CD4-positive, alpha-beta T cell (primary cell): ENCODE measurements at regions of chrX and their contacts with region 1.

Region 1: DNA sequence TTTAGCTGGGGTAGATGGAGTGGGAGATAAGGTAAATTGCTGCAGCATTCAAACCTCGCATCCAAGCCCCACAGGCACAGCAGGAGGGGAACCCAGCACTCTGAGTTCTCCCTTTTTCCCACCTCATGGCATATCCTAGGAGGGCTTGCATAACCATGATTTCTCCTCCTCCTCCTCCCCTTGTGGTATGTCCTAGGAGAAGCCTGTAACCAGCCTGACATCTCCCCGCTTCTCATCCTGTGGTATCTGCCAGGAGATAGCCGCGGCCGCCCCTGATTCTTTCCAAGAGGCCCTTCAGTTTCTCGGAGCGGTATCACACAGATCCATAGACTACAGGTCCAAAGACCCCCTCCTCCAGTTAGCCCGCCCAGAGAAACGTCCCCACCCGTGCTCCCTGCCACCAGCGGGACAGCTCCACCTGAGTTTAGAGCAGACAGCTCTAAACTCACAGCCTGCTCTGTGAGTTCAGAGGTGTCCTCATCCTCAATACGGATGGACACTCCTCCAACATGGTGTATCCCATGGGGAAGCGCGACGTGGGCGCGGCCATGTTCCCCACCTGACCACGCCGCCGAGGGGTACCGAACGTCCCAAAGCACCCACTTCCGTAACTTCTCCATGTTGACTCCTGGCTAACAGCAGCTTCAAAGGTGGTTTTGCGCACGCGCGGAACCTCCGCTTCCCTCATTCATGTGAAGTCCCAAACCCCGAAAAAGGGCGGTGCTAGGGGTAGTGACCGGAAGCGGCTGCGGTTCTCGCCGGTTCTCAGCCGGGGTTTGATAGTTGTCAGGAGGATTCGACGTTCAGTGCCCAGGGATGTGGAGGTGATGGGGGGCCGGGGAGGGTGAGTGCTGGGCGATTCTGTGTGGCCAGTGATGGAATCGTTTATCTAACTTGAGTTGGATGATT is at the start of gene ZNF81:
- DNase-seq: peak; percentile 80 to 95 (median 88)
- ATAC-seq: peak; percentile 96
- H3K4me3 ChIP-seq: peak within 1 kb of the TSS; percentile 77
- H3K4me3 Mint-ChIP-seq: peak within 1 kb of the TSS; percentile 99
- H3K27ac ChIP-seq: peak within 1 kb of the TSS; percentile 22 to 52
- H3K27ac Mint-ChIP-seq: peak within 1 kb of the TSS; percentile 97
- H3K4me1 ChIP-seq: peaks cover 10% of the 10 kb centered on the region
- H3K4me1 Mint-ChIP-seq: peaks cover 37% of the 10 kb centered on the region
- H3K27me3 ChIP-seq: no peaks in the 10 kb centered on the region
- H3K27me3 Mint-ChIP-seq: no peaks in the 10 kb centered on the region
- CTCF ChIP-seq: no peak
- total RNA-seq, gene ZNF81: 5.1 to 5.7 TPM

Region 2: DNA sequence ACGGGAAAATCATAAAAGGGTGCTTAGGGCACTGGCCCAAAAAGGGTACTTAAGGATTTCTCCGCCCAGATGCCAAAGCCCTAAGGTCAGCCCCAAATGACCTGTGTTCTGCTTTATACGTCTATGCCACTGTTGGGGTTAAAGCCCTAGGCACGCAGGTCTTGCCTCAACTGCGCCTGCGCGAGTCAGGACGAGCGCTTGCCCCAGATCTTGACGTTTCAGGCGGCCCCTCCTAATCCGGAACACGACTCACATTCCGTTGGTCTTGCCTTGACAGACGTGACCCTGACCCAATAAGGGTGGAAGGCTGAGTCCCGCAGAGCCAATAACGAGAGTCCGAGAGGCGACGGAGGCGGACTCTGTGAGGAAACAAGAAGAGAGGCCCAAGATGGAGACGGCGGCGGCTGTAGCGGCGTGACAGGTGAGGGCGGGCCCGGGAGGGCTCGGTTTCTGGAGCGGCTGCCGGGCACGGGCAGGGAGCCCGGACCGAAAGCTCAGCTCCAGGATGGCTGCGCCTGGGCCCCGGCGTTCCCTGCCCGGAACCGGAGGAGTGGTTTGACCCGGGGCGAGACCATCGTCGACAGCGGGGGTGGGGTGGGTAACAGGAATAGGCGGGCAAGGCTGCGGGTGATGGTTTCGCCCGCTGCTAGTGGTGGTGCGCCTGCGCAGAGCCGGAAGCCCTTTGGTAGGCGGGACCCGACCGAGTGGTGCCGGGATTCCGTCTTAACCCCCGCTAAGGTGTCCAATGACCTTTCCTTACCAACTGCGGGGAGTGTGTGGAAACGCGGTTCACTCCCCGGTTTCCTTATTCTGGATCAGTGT is 275.4 kb before region 1 on chrX and contains the start of gene ARAF:
- CTCF ChIA-PET with region 1: no interaction called
- POLR2A ChIA-PET with region 1: no interaction called
- intact Hi-C with region 1: loop called in 1 of 2 experiments (anchors 10 kb)
- DNase-seq: peak; percentile 85 to 99 (median 92)
- ATAC-seq: peak; percentile 86
- H3K4me3 ChIP-seq: peak within 1 kb of the TSS; percentile 85
- H3K4me3 Mint-ChIP-seq: peak within 1 kb of the TSS; percentile 95
- H3K27ac ChIP-seq: peak within 1 kb of the TSS; percentile 79 to 96
- H3K27ac Mint-ChIP-seq: peak within 1 kb of the TSS; percentile 96
- H3K4me1 ChIP-seq: peaks cover 40% of the 10 kb centered on the region
- H3K4me1 Mint-ChIP-seq: peaks cover 51% of the 10 kb centered on the region
- H3K27me3 ChIP-seq: no peaks in the 10 kb centered on the region
- H3K27me3 Mint-ChIP-seq: no peaks in the 10 kb centered on the region
- CTCF ChIP-seq: no peak
- total RNA-seq, gene ARAF: 119 to 121 TPM

Region 3: GRCh38 chrX:47650164-47651042 is 186.0 kb before region 1 on chrX and contains the start of gene ELK1:
- CTCF ChIA-PET with region 1: no interaction called
- POLR2A ChIA-PET with region 1: no interaction called
- intact Hi-C with region 1: loop called in 1 of 2 experiments (anchors 10 kb)
- DNase-seq: peak; percentile 75 to 96 (median 84)
- ATAC-seq: peak; percentile 88
- H3K4me3 ChIP-seq: peak within 1 kb of the TSS; percentile 83
- H3K4me3 Mint-ChIP-seq: peak within 1 kb of the TSS; percentile 94
- H3K27ac ChIP-seq: peak within 1 kb of the TSS; percentile 65 to 76
- H3K27ac Mint-ChIP-seq: peak within 1 kb of the TSS; percentile 89
- H3K4me1 ChIP-seq: peaks cover 29% of the 10 kb centered on the region
- H3K4me1 Mint-ChIP-seq: peaks cover 39% of the 10 kb centered on the region
- H3K27me3 ChIP-seq: no peaks in the 10 kb centered on the region
- H3K27me3 Mint-ChIP-seq: no peaks in the 10 kb centered on the region
- CTCF ChIP-seq: no peak
- total RNA-seq, gene ELK1: 38.9 to 40.5 TPM

Region 4: GRCh38 chrX:47658684-47659515 is 177.5 kb before region 1 on chrX and contains the start of gene UXT:
- CTCF ChIA-PET with region 1: no interaction called
- POLR2A ChIA-PET with region 1: no interaction called
- intact Hi-C with region 1: loop called (anchors 1 to 10 kb)
- DNase-seq: peak; percentile 82 to 96 (median 87)
- ATAC-seq: peak; percentile 82
- H3K4me3 ChIP-seq: peak within 1 kb of the TSS; percentile 77
- H3K4me3 Mint-ChIP-seq: peak within 1 kb of the TSS; percentile 89
- H3K27ac ChIP-seq: peak within 1 kb of the TSS; percentile 94 to 99
- H3K27ac Mint-ChIP-seq: peak within 1 kb of the TSS; percentile 97
- H3K4me1 ChIP-seq: peaks cover 14% of the 10 kb centered on the region
- H3K4me1 Mint-ChIP-seq: peaks cover 24% of the 10 kb centered on the region
- H3K27me3 ChIP-seq: no peaks in the 10 kb centered on the region
- H3K27me3 Mint-ChIP-seq: no peaks in the 10 kb centered on the region
- CTCF ChIP-seq: no peak
- total RNA-seq, gene UXT: 188 to 197 TPM

Region 5: DNA sequence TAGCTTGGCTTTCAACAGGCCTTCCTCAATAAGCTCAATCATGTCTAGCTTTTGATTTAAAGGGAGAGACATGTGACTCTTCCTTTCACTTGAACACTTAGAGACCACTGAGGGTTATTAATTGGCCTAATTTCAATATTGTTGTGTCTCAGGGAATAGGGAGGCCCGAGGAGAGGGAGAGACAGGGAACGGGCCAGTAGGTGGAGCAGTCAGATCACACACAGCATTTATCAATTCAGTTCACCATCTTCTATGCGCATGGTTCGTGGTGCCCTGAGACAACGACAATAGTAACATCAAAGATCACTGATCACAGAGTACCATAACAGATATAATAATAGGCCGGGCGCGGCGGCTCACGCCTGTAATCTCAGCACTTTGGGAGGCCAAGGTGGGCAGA is 18.1 kb after region 1 on chrX:
- CTCF ChIA-PET with region 1: no interaction called
- POLR2A ChIA-PET with region 1: no interaction called
- intact Hi-C with region 1: loop called in 1 of 2 experiments (anchors 1 kb)
- DNase-seq: peak in 13 of 14 experiments; percentile 1 to 55 (median 15)
- ATAC-seq: peak; percentile 76
- H3K4me3 ChIP-seq: no peak overlapping the region
- H3K4me3 Mint-ChIP-seq: no peak overlapping the region
- H3K27ac ChIP-seq: no peak overlapping the region
- H3K27ac Mint-ChIP-seq: no peak overlapping the region
- H3K4me1 ChIP-seq: no peaks in the 10 kb centered on the region
- H3K4me1 Mint-ChIP-seq: no peaks in the 10 kb centered on the region
- H3K27me3 ChIP-seq: no peaks in the 10 kb centered on the region
- H3K27me3 Mint-ChIP-seq: no peaks in the 10 kb centered on the region
- CTCF ChIP-seq: no peak

Region 6: GRCh38 chrX:47958761-47959342 is 122.4 kb after region 1 on chrX:
- CTCF ChIA-PET with region 1: no interaction called
- POLR2A ChIA-PET with region 1: no interaction called
- intact Hi-C with region 1: loop called in 1 of 2 experiments (anchors 5 kb)
- DNase-seq: peak in 7 of 14 experiments; percentile 1 to 59 (median 39)
- ATAC-seq: peak; percentile 70
- H3K4me3 ChIP-seq: no peak overlapping the region
- H3K4me3 Mint-ChIP-seq: no peak overlapping the region
- H3K27ac ChIP-seq: no peak overlapping the region
- H3K27ac Mint-ChIP-seq: no peak overlapping the region
- H3K4me1 ChIP-seq: peaks cover 4% of the 10 kb centered on the region
- H3K4me1 Mint-ChIP-seq: no peaks in the 10 kb centered on the region
- H3K27me3 ChIP-seq: no peaks in the 10 kb centered on the region
- H3K27me3 Mint-ChIP-seq: no peaks in the 10 kb centered on the region
- CTCF ChIP-seq: peak; percentile 34

Region 7: DNA sequence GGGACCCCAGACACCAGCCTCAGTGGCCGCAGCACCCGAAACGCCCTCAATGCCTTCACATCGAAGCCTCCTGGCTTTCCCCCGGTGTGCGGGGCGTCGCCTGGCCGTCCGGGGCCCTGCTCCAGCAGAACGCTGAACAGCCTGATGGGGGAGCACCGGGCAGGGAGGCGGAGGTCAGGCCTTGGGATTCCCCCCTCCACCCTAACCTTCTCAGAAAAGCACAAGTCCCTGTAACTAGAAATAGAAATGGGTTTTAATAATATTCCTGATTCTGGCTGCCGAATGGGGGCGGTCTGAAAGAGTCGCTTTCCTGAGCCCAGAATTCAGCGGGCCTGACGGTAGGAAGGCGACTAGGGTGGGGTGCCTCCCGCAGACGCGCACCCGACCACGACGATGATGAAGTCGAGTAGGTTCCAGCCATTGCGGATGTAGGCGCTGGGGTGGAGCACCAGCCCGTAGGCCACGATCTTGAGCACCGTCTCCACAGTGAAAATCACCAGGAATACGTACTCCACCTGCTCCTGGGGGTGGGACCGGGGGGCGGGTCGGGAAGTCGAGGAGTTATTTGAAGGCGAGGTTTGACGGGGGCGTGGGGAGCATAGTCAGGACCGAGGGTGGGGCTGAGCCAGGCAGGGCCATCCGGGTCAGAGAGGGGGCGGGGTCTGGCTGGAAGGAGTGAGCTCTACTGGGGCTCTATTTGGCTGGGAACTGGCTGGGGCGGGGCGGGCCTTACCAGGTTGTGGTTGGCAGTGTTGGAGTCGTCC is 1394.2 kb after region 1 on chrX:
- CTCF ChIA-PET with region 1: no interaction called
- POLR2A ChIA-PET with region 1: no interaction called
- intact Hi-C with region 1: loop called in 1 of 2 experiments (anchors 5 kb)
- DNase-seq: peak; percentile 20 to 73 (median 42)
- ATAC-seq: peak; percentile 64
- H3K4me3 ChIP-seq: peak overlapping the region; percentile 53
- H3K4me3 Mint-ChIP-seq: peak overlapping the region; percentile 77
- H3K27ac ChIP-seq: peak overlapping the region in 1 of 2 donors; percentile 13
- H3K27ac Mint-ChIP-seq: peak overlapping the region; percentile 87
- H3K4me1 ChIP-seq: peaks cover 21% of the 10 kb centered on the region
- H3K4me1 Mint-ChIP-seq: peaks cover 30% of the 10 kb centered on the region
- H3K27me3 ChIP-seq: no peaks in the 10 kb centered on the region
- H3K27me3 Mint-ChIP-seq: no peaks in the 10 kb centered on the region
- CTCF ChIP-seq: no peak